Adrenal gland (tissue), 19 donors: ENCODE measurements at regions of chr14 and their contacts with region 1.

Region 1: DNA sequence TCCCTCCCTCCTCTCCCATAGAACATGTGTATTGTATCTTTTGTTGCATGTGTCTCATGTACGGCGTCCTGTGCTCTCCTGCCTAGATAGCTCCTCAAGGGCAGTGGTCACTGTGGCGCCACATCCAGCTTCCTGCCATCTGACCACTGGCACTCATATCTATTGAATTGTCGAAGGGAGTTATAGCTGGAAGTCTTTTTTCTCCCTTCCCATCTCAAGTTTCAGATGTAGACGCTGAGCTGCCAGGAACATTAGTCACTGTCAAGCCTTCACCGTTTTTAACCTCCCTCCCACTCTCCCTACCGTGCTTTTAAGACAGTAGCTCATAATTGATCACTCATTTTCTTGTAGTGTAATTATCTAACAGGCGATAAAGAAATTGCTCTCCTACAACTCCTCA is 33.0 kb downstream of the MTHFD1 start:
- DNase-seq: no peak
- H3K4me3 ChIP-seq: no peak overlapping the region
- H3K27ac ChIP-seq: no peak overlapping the region
- H3K4me1 ChIP-seq: peaks cover 0 to 3% of the 10 kb centered on the region in 2 donors
- H3K27me3 ChIP-seq: no peaks in the 10 kb centered on the region
- CTCF ChIP-seq: no peak
- POLR2A ChIP-seq: no peak

Region 2: DNA sequence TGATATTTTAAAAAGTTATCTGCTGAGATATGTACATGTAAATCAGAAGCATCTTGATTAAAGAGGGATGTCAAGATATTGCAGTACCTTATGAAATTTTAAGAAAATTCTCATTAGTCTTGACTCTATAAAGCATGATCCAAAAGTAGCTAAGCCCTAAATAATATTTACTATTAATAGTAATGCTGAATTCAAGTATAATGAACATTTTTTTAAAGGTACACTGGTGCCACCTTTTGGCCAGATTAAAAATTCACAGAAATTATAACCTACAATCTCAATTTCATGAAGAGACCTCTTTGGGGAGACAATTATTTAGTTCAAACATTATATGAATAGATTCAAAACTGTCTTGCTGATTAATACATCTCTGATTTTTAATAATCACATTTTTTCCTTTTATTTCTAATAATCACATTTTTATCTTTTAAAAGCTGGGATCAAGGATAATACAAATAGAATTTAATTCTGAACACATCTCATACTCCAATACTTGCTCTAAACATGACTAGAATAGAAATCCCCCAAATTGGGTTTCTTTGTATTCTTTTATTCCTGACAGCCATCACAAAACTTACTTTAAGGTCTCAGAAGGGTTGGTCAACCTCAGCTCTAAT is 57.6 kb after region 1 on chr14:
- intact Hi-C with region 1: loop called in 1 of 2 experiments (anchors 10 kb)
- DNase-seq: no peak
- H3K4me3 ChIP-seq: no peak overlapping the region
- H3K27ac ChIP-seq: no peak overlapping the region
- H3K4me1 ChIP-seq: no peaks in the 10 kb centered on the region
- H3K27me3 ChIP-seq: no peaks in the 10 kb centered on the region
- CTCF ChIP-seq: peak in 5 of 6 experiments; percentile 23 to 61 (median 58)
- POLR2A ChIP-seq: no peak